Common myeloid progenitor, CD34-positive (primary cell): ENCODE measurements at regions of chr11 and their contacts with region 1.

Region 1: GRCh38 chr11:13772223-13773046 is 104.0 kb downstream of the FAR1 start:
- DNase-seq: peak; percentile 84 to 92 (median 90)
- H3K4me3 ChIP-seq: no peak overlapping the region
- H3K27ac ChIP-seq: no peak overlapping the region
- H3K4me1 ChIP-seq: no peaks in the 10 kb centered on the region
- H3K27me3 ChIP-seq: peaks cover 0 to 10% (median 2%) of the 10 kb centered on the region in 5 experiments

Region 2: DNA sequence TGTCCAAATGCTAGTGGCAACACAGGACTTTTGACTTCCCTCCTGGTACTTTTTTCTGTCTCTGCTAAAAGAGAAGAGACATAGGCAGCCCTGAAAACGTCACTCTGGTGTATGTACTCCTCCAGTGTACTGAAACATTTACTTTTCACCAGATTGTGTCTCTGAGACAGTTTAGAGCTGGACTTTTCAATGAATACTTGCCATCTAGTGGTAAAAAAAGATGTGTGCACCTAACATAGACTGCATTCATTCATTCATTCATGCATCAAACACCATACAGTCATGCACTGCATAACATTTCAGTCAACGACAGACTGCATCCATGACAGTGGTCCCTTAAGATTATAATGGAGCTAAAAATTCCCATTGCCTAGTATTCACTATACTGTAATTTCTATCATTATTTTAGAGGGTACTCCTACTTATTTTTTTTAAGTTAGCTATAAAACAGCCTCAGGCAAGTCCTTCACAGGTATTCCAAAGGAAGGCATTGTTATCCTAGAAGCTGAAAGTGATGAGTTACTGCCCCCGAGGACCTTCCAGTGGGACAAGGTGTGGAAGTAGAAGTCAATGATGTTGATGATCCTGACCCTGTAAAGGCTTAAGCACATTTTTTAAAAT is 376.3 kb after region 1 on chr11:
- CTCF ChIA-PET with region 1: interaction called, 37 read pairs
- POLR2A ChIA-PET with region 1: no interaction called
- DNase-seq: peak; percentile 38 to 67 (median 66)
- H3K4me3 ChIP-seq: no peak overlapping the region
- H3K27ac ChIP-seq: no peak overlapping the region
- H3K4me1 ChIP-seq: no peaks in the 10 kb centered on the region
- H3K27me3 ChIP-seq: peaks cover 0 to 8% (median 0%) of the 10 kb centered on the region in 5 experiments

Region 3: GRCh38 chr11:14249121-14249963 is 476.9 kb after region 1 on chr11:
- CTCF ChIA-PET with region 1: interaction called, 24 read pairs
- POLR2A ChIA-PET with region 1: no interaction called
- DNase-seq: peak; percentile 60 to 79 (median 71)
- H3K4me3 ChIP-seq: peak overlapping the region in 1 of 7 experiments; percentile 19
- H3K27ac ChIP-seq: no peak overlapping the region
- H3K4me1 ChIP-seq: peaks cover 0 to 14% (median 10%) of the 10 kb centered on the region in 4 experiments
- H3K27me3 ChIP-seq: peaks cover 0 to 59% (median 17%) of the 10 kb centered on the region in 5 experiments